ENCODE measurements at regions of chr11 and their contacts with region 1.

Region 1: DNA sequence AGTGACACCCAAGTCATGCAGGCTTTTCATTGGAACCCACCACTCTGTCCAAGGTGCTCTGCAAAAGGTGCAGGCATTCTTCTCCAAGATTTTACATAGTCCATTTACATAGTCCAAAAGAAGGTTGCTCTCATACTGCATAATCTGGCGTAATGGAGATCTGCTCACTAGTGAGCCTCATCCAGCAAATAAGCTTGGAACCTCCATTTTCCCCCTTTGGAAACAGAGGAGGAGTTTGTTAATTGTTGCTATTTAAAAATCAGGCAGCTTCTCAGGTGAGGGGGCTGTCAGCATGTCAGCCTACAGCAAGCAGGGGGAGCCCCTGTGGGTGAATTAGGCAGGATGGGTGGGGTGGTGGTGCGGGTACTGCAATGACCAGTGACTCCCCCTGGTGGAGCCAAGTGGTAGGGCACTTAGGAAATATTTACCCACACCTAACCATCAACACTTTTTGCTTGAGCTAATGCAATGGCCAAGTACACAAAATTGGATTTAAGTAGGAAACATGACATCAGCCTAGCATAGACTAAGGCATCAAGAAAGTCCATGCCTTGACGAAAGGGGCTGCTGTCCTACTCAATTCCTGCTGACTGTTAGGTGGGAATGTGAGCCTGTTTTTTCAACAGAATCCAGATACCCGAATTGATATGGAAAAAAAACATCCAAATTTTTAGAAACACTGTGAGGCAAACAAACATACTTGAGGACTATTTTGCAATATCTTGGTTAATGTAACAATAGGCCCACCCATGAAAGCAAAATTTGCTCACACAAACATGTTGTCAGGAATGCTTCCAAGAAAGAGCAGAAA is 64.5 kb downstream of the AMBRA1 start:
- DNase-seq: peak; percentile 69
- ATAC-seq: peak; percentile 86

Region 2: DNA sequence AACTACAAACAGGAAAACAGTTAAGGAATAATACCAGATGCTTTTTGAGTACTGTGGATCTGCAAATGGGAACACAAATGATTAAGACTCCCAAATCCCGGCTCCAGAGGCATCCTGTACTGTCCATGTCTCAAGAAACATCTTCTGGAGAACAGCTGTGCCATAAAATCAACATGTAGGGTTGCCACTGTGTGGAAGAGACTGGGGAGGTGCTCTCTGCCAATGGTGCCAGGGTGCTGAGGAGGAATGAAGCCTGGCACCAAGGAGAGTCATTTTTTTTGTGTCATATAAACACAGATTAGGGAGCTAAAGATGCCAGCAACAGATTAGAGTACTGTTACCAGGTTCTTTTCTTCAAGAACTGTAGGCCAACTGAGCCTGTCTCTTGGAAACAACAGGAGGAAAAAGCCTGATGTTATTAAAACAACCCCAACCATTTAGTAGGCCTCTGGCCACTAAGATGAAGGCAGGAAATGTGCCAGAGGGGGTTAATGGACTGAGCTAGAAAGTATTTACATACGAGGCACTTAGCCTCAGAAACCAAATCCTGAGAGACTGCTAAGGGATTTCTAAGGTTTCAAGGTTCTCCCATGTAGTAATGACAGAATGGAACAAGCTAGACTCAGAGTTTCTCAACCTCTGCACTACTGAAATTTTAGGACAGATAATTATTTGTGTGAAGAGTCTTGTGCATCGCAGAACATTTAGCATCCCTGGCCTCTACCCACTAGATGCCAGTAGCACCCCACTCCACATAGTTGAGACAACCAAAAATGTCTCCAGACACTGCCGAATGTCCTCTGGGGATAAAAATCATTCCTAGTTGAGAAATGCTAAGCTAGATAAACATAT is 83.2 kb before region 1 on chr11:
- intact Hi-C with region 1: no loop called
- DNase-seq: no peak
- ATAC-seq: peak; percentile 24

Region 3: GRCh38 chr11:46489661-46490560 is 39.4 kb before region 1 on chr11:
- intact Hi-C with region 1: loop called (anchors 5 kb)
- DNase-seq: no peak
- ATAC-seq: peak; percentile 55